Activated T-helper 1 cell treated with anti-CD3 and anti-CD28 coated beads, Interleukin-12 subunit alpha, Interleukin-12 subunit beta, Interleukin-2, Interleukin-4 antibody, amounts not matched to agents 30 ng/mL and 10 ng/mL and 1 ng/mL, durations not matched to agents 14 hours and 24 hours and 36 hours (primary cell): ENCODE measurements at regions of chr12 and their contacts with region 1.

Region 1: DNA sequence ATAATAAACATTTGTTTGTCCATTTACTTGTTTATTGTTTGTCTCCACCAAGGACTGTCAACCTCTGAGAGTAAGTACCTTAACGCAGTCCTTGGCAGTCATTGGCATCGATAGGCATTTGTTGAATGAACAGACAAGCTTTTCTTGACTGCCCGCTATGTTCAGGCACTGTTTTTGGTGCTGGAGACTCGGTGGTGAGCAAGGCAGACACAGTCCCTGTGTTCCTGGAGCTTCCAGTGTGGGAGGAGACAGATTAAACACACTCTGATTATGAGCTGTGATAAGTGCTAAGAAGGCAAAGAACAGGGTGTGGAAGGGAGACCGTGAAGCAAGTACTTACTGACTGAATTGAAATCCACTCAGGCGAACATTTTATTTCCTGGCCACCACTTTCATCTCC is 1.2 kb downstream of the ATP6V0A2 start:
- DNase-seq: peak; percentile 8
- H3K4me3 Mint-ChIP-seq: peak overlapping the region; percentile 91
- H3K27ac Mint-ChIP-seq: peak overlapping the region; percentile 85
- H3K4me1 Mint-ChIP-seq: peaks cover 41% of the 10 kb centered on the region
- H3K27me3 Mint-ChIP-seq: no peaks in the 10 kb centered on the region

Region 2: DNA sequence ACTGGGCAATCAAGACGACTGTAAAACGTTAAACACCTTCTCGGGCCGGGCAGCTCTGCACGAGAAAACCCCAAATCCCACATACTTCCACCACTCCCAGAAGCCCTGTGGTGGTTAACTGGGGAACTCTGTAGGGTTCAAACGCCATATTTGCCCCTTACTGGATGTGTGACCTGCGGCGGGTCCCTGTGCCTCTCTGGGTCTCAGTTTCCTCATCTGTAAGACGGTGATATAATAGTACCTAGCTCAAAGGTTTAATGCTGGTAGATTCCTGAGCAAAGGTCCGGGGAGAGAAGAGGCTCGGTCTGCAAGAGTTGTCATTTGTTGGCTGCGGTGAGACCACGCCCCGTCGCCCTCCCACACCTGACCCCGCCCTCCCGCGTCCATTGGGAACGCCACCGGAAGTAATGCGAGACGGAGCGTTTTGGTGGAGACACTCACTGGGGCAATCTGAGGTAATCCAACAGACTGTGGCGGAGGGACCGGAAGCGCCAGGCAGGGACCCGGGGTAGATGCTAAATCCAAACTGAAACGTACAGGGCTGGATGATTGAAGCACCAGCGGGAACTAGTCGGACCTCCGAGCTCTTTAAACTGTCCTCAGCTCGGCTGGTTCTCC is 739.0 kb before region 1 on chr12:
- intact Hi-C with region 1: loop called (anchors 10 kb)
- DNase-seq: peak; percentile 98
- H3K4me3 Mint-ChIP-seq: peak overlapping the region; percentile 98
- H3K27ac Mint-ChIP-seq: peak overlapping the region; percentile 98
- H3K4me1 Mint-ChIP-seq: peaks cover 12% of the 10 kb centered on the region
- H3K27me3 Mint-ChIP-seq: peaks cover 3% of the 10 kb centered on the region

Region 3: GRCh38 chr12:123388177-123388947 is 325.0 kb before region 1 on chr12:
- intact Hi-C with region 1: loop called (anchors 5 kb)
- DNase-seq: peak; percentile 78
- H3K4me3 Mint-ChIP-seq: peak overlapping the region; percentile 82
- H3K27ac Mint-ChIP-seq: peak overlapping the region; percentile 93
- H3K4me1 Mint-ChIP-seq: peaks cover 39% of the 10 kb centered on the region
- H3K27me3 Mint-ChIP-seq: no peaks in the 10 kb centered on the region

Region 4: DNA sequence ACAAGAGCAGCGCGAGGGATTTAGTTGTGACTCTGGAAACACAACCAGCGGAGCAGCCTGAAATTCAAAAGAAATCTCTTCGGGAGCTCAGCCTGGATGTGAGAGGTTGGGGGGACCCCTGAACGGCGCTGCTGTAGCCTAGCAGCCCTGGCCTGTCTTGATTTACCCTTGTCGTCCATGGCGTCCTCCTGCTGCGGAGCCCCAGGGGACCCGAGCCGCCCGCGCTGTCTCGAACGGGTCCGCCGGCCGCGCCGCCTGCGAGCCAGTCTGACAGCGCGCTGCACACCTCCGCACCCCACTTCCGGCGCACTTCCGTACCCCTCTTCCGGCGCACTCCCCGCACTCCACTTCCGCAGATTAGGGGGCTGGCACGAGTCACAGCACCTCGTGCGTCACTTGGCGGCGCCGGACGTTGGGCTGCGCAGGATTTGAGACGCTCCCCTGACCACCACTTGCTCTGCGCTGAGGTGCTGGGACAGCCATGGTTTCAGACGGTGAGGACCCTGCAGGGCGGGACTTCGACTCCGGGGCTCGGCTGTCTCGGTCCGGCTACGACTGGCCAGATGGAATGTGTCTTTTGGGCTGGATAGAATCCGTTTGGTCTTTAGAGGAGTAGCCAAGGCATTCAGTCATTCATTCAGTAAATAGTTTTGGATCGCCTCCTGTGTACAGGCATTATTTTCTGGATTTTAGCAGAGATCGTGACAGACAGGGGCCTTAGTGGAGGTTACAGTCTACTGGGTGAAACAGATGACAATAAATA is 79.8 kb before region 1 on chr12 and contains the starts of genes EIF2B1 and GTF2H3:
- intact Hi-C with region 1: loop called (anchors 1 kb)
- DNase-seq: peak; percentile 96
- H3K4me3 Mint-ChIP-seq: peak within 1 kb of the TSS; percentile 98
- H3K27ac Mint-ChIP-seq: peak within 1 kb of the TSS; percentile 97
- H3K4me1 Mint-ChIP-seq: peaks cover 35% of the 10 kb centered on the region
- H3K27me3 Mint-ChIP-seq: no peaks in the 10 kb centered on the region
- total RNA-seq, gene EIF2B1: 74.8 and 76.5 TPM in 2 replicates
- total RNA-seq, gene GTF2H3: 65.8 and 66.1 TPM in 2 replicates

Region 5: DNA sequence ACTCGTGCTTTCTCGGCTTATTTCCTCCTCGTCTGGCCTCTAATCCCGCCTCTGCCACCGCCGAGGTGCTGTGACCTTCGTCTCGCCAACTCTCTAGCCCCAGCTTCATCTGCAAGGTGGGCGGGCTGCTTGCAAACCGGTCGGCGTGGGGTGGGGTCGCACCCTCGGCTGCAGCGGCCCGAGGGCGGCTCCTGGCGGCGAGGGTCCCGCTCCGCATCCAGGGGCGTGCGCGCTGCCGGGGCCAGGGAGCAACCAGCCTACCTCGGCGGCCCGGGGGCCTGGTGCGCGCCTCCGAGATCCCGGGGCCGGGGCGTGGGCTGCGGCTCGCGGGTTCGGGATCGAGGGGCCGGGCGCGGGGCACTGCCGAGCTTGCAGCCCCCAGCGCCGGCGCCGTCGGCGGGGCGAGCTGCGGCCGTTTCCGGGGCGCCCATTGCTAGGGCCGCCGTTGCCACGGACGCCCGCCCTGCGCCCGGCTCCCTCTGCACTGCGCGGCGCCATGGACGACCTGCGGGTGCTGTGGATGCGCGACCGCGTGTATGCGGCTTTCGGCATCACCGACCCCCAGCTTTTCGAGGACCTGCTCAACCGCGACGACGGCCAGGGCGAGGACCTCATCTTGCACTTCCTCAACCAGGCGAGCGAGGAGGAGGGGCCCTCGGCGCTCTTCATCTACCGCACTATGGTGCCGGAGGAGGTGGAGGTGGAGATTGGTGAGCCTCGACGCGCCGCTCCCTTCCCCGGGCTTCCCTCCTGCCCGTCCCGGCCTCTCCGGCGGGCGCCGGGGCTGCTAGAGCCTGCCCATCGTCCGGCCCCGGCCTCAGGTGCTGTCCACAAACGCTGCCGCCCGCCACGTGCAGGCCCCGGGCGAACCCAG is 48.7 kb after region 1 on chr12 and contains the start of gene DNAH10:
- intact Hi-C with region 1: loop called (anchors 1 kb)
- DNase-seq: peak; percentile 21
- H3K4me3 Mint-ChIP-seq: peak within 1 kb of the TSS; percentile 64
- H3K27ac Mint-ChIP-seq: peak within 1 kb of the TSS; percentile 59
- H3K4me1 Mint-ChIP-seq: no peaks in the 10 kb centered on the region
- H3K27me3 Mint-ChIP-seq: peaks cover 10% of the 10 kb centered on the region
- total RNA-seq, gene DNAH10: 0.12 and 0.31 TPM in 2 replicates

Region 6: DNA sequence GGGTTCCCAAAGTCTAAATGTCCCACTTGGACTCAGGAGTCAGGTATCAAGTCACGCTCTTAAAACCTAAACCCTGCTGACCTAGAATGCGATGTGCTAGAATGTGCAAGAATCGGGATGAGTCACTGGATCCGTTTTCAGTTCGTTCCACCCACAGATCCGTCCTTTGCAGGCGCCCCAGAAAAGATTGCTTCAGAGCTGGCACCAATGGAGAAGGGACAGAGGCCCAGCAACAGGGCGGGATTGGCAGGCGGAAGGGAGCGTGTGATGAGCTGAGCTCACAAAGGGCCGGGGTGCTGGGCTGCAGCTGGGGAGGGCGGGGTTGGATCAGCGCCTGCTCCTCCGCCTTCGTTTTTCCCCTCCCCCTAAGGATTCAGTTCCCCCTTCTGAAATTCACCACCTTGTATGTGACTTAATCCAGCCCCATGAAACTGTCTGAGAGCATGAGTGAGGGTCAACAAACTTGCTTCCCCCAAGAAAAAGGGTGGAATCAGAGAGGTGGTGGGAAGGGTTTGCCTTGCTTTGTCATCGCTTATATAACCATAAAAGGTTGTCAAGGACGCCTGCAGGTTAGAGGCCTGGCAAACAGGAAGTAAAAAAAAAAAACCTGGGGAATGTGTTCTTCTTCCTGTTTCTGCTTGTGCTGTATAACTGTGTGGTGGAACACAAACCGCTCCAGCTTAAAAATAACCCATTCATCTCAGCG is 1203.9 kb after region 1 on chr12:
- intact Hi-C with region 1: loop called (anchors 10 kb)
- DNase-seq: peak; percentile 92
- H3K4me3 Mint-ChIP-seq: peak overlapping the region; percentile 97
- H3K27ac Mint-ChIP-seq: peak overlapping the region; percentile 100
- H3K4me1 Mint-ChIP-seq: peaks cover 84% of the 10 kb centered on the region
- H3K27me3 Mint-ChIP-seq: no peaks in the 10 kb centered on the region